Calu3 (cell line): ENCODE measurements at regions of chr5 and their contacts with region 1.

Region 1: GRCh38 chr5:167565032-167565954 is 726.2 kb upstream of the WWC1 start:
- DNase-seq: no peak
- H3K4me3 Mint-ChIP-seq: no peak overlapping the region
- H3K27ac Mint-ChIP-seq: no peak overlapping the region
- H3K4me1 Mint-ChIP-seq: peaks cover 5% of the 10 kb centered on the region
- H3K27me3 Mint-ChIP-seq: peaks cover 58% of the 10 kb centered on the region
- CTCF ChIP-seq: no peak

Region 2: DNA sequence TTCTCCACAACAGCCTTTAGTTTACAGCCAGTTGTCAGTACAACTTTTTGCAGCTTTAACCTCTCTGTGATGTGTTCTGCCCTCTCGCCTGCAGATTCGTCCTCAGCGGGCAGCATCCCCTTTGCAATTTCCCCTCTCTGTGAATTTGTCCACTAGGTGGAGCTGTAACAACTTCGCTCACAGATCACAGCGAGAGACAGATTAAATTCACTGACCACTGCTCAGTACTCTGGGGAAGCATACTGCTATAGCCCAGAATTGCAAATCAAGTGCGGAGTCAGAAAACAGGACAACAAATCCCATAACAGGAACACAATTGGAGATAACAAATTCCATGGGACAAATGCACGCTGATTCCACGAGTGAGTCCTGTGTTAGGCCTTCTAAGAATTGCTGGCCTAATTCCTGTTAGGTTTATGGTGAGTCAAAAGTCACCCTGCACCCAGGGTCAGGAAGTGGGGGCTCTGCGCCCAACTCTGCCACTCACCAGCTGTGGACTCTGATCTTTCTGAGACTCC is 1935.0 kb before region 1 on chr5:
- CTCF ChIA-PET with region 1: no interaction called
- intact Hi-C with region 1: loop called (anchors 2 kb)
- DNase-seq: peak; percentile 75
- H3K4me3 Mint-ChIP-seq: no peak overlapping the region
- H3K27ac Mint-ChIP-seq: no peak overlapping the region
- H3K4me1 Mint-ChIP-seq: peaks cover 11% of the 10 kb centered on the region
- H3K27me3 Mint-ChIP-seq: no peaks in the 10 kb centered on the region
- CTCF ChIP-seq: peak; percentile 42

Region 3: DNA sequence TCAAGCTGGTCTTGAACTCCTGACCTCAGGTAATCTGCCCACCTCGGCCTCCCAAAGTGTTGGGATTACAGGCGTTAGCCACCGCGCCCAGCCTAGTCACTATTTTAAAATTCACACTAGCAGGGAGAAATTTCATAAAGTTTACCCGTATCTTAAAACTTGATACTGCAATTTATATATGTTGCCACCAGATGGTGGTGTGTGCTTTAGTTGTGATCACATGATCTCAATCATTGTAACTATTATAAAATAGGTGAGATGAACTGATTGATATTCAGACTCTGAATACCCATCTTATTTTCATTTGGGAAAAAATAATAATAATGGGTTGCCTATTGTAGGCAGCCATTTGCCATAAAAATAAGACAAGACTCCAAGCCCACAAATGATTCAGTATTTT is 604.3 kb before region 1 on chr5:
- CTCF ChIA-PET with region 1: no interaction called
- intact Hi-C with region 1: loop called (anchors 5 kb)
- DNase-seq: no peak
- H3K4me3 Mint-ChIP-seq: no peak overlapping the region
- H3K27ac Mint-ChIP-seq: no peak overlapping the region
- H3K4me1 Mint-ChIP-seq: peaks cover 45% of the 10 kb centered on the region
- H3K27me3 Mint-ChIP-seq: no peaks in the 10 kb centered on the region
- CTCF ChIP-seq: peak; percentile 14

Region 4: DNA sequence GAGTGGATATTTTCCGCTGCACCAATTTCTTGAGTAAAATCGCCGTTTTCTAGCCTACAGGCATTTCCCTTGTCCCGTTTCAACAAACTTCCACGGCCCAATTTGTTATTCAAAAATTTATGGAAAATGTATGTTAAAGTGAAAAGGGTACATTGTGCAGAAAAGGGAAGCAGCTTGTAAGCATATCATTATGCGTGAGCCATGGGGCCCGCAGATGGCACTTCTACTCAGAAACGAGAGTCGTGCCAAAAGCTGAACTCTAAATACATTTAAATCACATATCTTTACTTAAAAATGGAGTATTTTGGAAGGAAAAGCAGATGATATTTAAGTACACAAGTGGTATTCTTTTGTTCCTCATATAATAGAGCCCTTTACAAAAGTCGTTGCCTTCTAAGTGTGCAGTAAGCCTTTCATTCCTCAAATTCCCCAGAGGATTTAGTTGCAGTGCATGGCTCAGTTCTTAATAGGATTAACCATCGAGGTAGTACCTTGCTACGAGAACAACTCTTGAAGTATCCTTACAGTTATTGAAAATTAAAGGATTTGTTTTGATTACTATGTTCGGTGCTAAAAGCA is 501.0 kb before region 1 on chr5:
- CTCF ChIA-PET with region 1: no interaction called
- intact Hi-C with region 1: loop called (anchors 10 kb)
- DNase-seq: no peak
- H3K4me3 Mint-ChIP-seq: no peak overlapping the region
- H3K27ac Mint-ChIP-seq: no peak overlapping the region
- H3K4me1 Mint-ChIP-seq: no peaks in the 10 kb centered on the region
- H3K27me3 Mint-ChIP-seq: no peaks in the 10 kb centered on the region
- CTCF ChIP-seq: no peak

Region 5: GRCh38 chr5:167261309-167262100 is 303.8 kb before region 1 on chr5:
- CTCF ChIA-PET with region 1: interaction called, 8 read pairs
- intact Hi-C with region 1: loop called (anchors 2 kb)
- DNase-seq: no peak
- H3K4me3 Mint-ChIP-seq: no peak overlapping the region
- H3K27ac Mint-ChIP-seq: no peak overlapping the region
- H3K4me1 Mint-ChIP-seq: no peaks in the 10 kb centered on the region
- H3K27me3 Mint-ChIP-seq: no peaks in the 10 kb centered on the region
- CTCF ChIP-seq: peak; percentile 26

Region 6: GRCh38 chr5:167361795-167362194 is 203.5 kb before region 1 on chr5:
- CTCF ChIA-PET with region 1: no interaction called
- intact Hi-C with region 1: loop called (anchors 10 kb)
- DNase-seq: no peak
- H3K4me3 Mint-ChIP-seq: no peak overlapping the region
- H3K27ac Mint-ChIP-seq: no peak overlapping the region
- H3K4me1 Mint-ChIP-seq: no peaks in the 10 kb centered on the region
- H3K27me3 Mint-ChIP-seq: no peaks in the 10 kb centered on the region
- CTCF ChIP-seq: no peak

Region 7: DNA sequence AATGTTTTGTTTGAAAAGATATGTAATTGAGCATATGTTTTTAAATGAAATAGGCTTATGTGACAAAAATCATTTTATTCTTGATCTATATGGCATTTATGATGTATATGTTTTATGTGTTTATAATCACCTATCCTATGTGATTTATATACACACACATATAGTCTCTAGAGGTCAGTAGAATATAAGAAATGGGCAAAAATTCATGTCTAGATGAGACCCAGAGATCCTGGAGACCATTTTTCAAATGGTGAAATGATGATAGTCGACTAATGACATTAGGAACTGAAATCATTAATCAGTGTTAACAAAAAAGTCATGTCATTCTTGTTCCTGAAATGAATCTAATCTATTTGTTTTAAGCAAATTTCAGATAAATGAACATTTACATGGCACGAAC is 17.0 kb after region 1 on chr5:
- CTCF ChIA-PET with region 1: no interaction called
- intact Hi-C with region 1: no loop called
- DNase-seq: no peak
- H3K4me3 Mint-ChIP-seq: no peak overlapping the region
- H3K27ac Mint-ChIP-seq: no peak overlapping the region
- H3K4me1 Mint-ChIP-seq: no peaks in the 10 kb centered on the region
- H3K27me3 Mint-ChIP-seq: peaks cover 33% of the 10 kb centered on the region
- CTCF ChIP-seq: no peak

Region 8: DNA sequence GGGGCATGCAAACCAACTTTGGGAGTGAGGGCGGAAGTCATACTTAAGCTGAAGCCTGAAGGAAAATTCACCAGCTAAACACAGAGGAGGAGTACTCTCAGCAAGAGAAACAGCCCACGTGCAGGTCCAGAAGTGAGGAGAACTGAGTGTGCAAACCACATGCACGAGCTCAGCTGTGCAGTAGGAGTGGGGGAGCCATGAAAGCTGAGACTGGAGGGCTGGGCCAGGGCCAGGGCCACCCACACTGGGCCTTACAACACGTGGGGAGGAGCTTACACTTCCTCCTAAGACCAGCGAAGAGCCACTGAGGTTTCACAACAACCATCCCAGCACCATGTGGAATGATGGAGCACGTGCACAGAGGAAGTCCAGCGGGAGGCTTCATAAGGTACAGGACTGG is 716.8 kb after region 1 on chr5:
- CTCF ChIA-PET with region 1: no interaction called
- intact Hi-C with region 1: no loop called
- DNase-seq: no peak
- H3K4me3 Mint-ChIP-seq: no peak overlapping the region
- H3K27ac Mint-ChIP-seq: peak overlapping the region; percentile 13
- H3K4me1 Mint-ChIP-seq: peaks cover 30% of the 10 kb centered on the region
- H3K27me3 Mint-ChIP-seq: no peaks in the 10 kb centered on the region
- CTCF ChIP-seq: no peak